ENCODE measurements at regions of chr6 and their contacts with region 1.

Region 1: DNA sequence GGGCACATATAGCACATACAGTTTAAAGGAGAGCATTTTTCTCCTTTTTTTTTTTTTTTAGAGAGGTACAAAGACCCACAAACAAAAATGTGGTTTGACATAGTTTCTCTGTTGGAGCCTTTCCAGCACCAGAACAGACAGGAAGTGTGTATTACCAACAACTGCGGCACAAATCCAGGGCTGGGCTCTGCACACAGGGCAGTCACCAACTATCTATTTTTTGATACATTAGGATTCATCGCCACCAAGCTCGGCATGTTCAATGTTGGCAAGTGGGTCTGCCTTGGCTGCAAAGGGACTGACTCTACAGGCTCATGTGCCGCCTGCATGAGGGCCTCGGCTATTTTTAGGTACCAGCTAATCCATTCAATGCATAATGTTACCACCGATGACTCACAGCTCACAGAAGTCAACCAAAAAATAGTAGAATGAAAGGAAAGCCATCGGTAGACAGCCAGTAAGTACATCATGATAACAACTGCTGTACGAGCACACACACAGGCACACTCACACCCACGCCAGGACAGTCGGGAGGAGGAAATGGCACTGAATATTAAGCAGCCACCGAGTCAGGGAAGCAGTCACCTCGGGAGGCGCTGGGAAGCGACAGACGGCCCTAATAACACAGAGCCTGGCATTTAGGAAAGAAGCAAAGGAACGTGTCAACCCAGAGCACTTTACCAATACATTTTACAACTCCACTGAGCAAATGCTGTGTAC is 81.6 kb downstream of the GMPR start:
- DNase-seq: peak; percentile 40 to 83 (median 61)
- ATAC-seq: peak; percentile 66 to 79 (median 78)
- H3K4me3 ChIP-seq: peak overlapping the region; percentile 32 to 38
- H3K4me3 Mint-ChIP-seq: peak overlapping the region; percentile 52 to 79 (median 70)
- H3K27ac ChIP-seq: peak overlapping the region; percentile 95
- H3K27ac Mint-ChIP-seq: peak overlapping the region; percentile 83 to 93
- H3K4me1 ChIP-seq: peaks cover 35 to 75% of the 10 kb centered on the region in 2 experiments
- H3K4me1 Mint-ChIP-seq: peaks cover 69 to 82% (median 77%) of the 10 kb centered on the region in 3 donors
- H3K27me3 ChIP-seq: no peaks in the 10 kb centered on the region
- H3K27me3 Mint-ChIP-seq: no peaks in the 10 kb centered on the region

Region 2: GRCh38 chr6:16168858-16169257 is 151.1 kb before region 1 on chr6:
- CTCF ChIA-PET with region 1: no interaction called
- POLR2A ChIA-PET with region 1: no interaction called
- DNase-seq: peak in 2 of 35 experiments; percentile 11 to 50
- ATAC-seq: peak in 2 of 4 experiments; percentile 32 to 68
- H3K4me3 ChIP-seq: no peak overlapping the region
- H3K4me3 Mint-ChIP-seq: no peak overlapping the region
- H3K27ac ChIP-seq: no peak overlapping the region
- H3K27ac Mint-ChIP-seq: no peak overlapping the region
- H3K4me1 ChIP-seq: peaks cover 5 to 13% of the 10 kb centered on the region in 2 experiments
- H3K4me1 Mint-ChIP-seq: peaks cover 17 to 27% (median 17%) of the 10 kb centered on the region in 3 donors
- H3K27me3 ChIP-seq: no peaks in the 10 kb centered on the region
- H3K27me3 Mint-ChIP-seq: peaks cover 0 to 13% of the 10 kb centered on the region in 2 donors

Region 3: GRCh38 chr6:16271428-16271827 is 48.5 kb before region 1 on chr6:
- CTCF ChIA-PET with region 1: no interaction called
- POLR2A ChIA-PET with region 1: interaction called in 1 of 2 experiments, 18 read pairs
- DNase-seq: no peak
- ATAC-seq: no peak
- H3K4me3 ChIP-seq: no peak overlapping the region
- H3K4me3 Mint-ChIP-seq: no peak overlapping the region
- H3K27ac ChIP-seq: no peak overlapping the region
- H3K27ac Mint-ChIP-seq: no peak overlapping the region
- H3K4me1 ChIP-seq: no peaks in the 10 kb centered on the region
- H3K4me1 Mint-ChIP-seq: no peaks in the 10 kb centered on the region
- H3K27me3 ChIP-seq: no peaks in the 10 kb centered on the region
- H3K27me3 Mint-ChIP-seq: peaks cover 0 to 2% of the 10 kb centered on the region in 2 donors

Region 4: GRCh38 chr6:16296061-16296670 is 23.8 kb before region 1 on chr6:
- CTCF ChIA-PET with region 1: no interaction called
- POLR2A ChIA-PET with region 1: interaction called in 1 of 2 experiments, 10 read pairs
- DNase-seq: no peak
- ATAC-seq: no peak
- H3K4me3 ChIP-seq: no peak overlapping the region
- H3K4me3 Mint-ChIP-seq: no peak overlapping the region
- H3K27ac ChIP-seq: no peak overlapping the region
- H3K27ac Mint-ChIP-seq: no peak overlapping the region
- H3K4me1 ChIP-seq: no peaks in the 10 kb centered on the region
- H3K4me1 Mint-ChIP-seq: no peaks in the 10 kb centered on the region
- H3K27me3 ChIP-seq: no peaks in the 10 kb centered on the region
- H3K27me3 Mint-ChIP-seq: no peaks in the 10 kb centered on the region

Region 5: GRCh38 chr6:16332175-16332542 is 12.2 kb after region 1 on chr6:
- CTCF ChIA-PET with region 1: interaction called, 4 to 27 read pairs
- POLR2A ChIA-PET with region 1: interaction called in 1 of 2 experiments, 10 read pairs
- DNase-seq: peak; percentile 55 to 92 (median 76)
- ATAC-seq: peak; percentile 83 to 96 (median 84)
- H3K4me3 ChIP-seq: no peak overlapping the region
- H3K4me3 Mint-ChIP-seq: no peak overlapping the region
- H3K27ac ChIP-seq: peak overlapping the region; percentile 45
- H3K27ac Mint-ChIP-seq: no peak overlapping the region
- H3K4me1 ChIP-seq: peaks cover 5 to 16% of the 10 kb centered on the region in 2 experiments
- H3K4me1 Mint-ChIP-seq: peaks cover 0 to 2% (median 0%) of the 10 kb centered on the region in 3 donors
- H3K27me3 ChIP-seq: no peaks in the 10 kb centered on the region
- H3K27me3 Mint-ChIP-seq: no peaks in the 10 kb centered on the region

Region 6: GRCh38 chr6:16901782-16902181 is 581.8 kb after region 1 on chr6:
- CTCF ChIA-PET with region 1: no interaction called
- POLR2A ChIA-PET with region 1: no interaction called
- DNase-seq: no peak
- ATAC-seq: no peak
- H3K4me3 ChIP-seq: no peak overlapping the region
- H3K4me3 Mint-ChIP-seq: no peak overlapping the region
- H3K27ac ChIP-seq: no peak overlapping the region
- H3K27ac Mint-ChIP-seq: no peak overlapping the region
- H3K4me1 ChIP-seq: no peaks in the 10 kb centered on the region
- H3K4me1 Mint-ChIP-seq: no peaks in the 10 kb centered on the region
- H3K27me3 ChIP-seq: no peaks in the 10 kb centered on the region
- H3K27me3 Mint-ChIP-seq: peaks cover 44 to 46% of the 10 kb centered on the region in 2 donors

Region 7: GRCh38 chr6:16972535-16972934 is 652.6 kb after region 1 on chr6:
- CTCF ChIA-PET with region 1: interaction called in 1 of 2 experiments, 10 read pairs
- POLR2A ChIA-PET with region 1: no interaction called
- DNase-seq: no peak
- ATAC-seq: no peak
- H3K4me3 ChIP-seq: no peak overlapping the region
- H3K4me3 Mint-ChIP-seq: no peak overlapping the region
- H3K27ac ChIP-seq: no peak overlapping the region
- H3K27ac Mint-ChIP-seq: no peak overlapping the region
- H3K4me1 ChIP-seq: no peaks in the 10 kb centered on the region
- H3K4me1 Mint-ChIP-seq: peaks cover 0 to 4% (median 0%) of the 10 kb centered on the region in 3 donors
- H3K27me3 ChIP-seq: peaks cover 0 to 2% of the 10 kb centered on the region in 2 experiments
- H3K27me3 Mint-ChIP-seq: peaks cover 24 to 35% of the 10 kb centered on the region in 2 donors

Measured in T-cell (primary cell).